ENCODE measurements at regions of chr11 and their contacts with region 1.

Region 1: GRCh38 chr11:63855975-63856749 is 17.3 kb downstream of the MARK2 start:
- DNase-seq: no peak
- H3K4me3 ChIP-seq: no peak overlapping the region
- H3K27ac ChIP-seq: no peak overlapping the region
- H3K4me1 ChIP-seq: peaks cover 0 to 5% (median 0%) of the 10 kb centered on the region in 4 experiments; a peak in 1 of 7 replicates
- H3K27me3 ChIP-seq: no peaks in the 10 kb centered on the region
- CTCF ChIP-seq: no peak
- EP300 ChIP-seq: no peak
- POLR2A ChIP-seq: no peak
- RAD21 ChIP-seq: no peak

Region 2: GRCh38 chr11:63427971-63428508 is 428.1 kb before region 1 on chr11:
- CTCF ChIA-PET with region 1: no interaction called
- POLR2A ChIA-PET with region 1: no interaction called
- DNase-seq: peak in 1 of 2 experiments; percentile 13
- H3K4me3 ChIP-seq: no peak overlapping the region
- H3K27ac ChIP-seq: no peak overlapping the region
- H3K4me1 ChIP-seq: peaks cover 0 to 3% (median 3%) of the 10 kb centered on the region in 4 experiments; a peak in 2 of 7 replicates
- H3K27me3 ChIP-seq: no peaks in the 10 kb centered on the region
- CTCF ChIP-seq: peak; percentile 18 to 75 (median 23); a peak in 3 of 4 replicates
- EP300 ChIP-seq: no peak
- POLR2A ChIP-seq: no peak
- RAD21 ChIP-seq: peak; percentile 40 to 52; a peak in 3 of 4 replicates

Region 3: DNA sequence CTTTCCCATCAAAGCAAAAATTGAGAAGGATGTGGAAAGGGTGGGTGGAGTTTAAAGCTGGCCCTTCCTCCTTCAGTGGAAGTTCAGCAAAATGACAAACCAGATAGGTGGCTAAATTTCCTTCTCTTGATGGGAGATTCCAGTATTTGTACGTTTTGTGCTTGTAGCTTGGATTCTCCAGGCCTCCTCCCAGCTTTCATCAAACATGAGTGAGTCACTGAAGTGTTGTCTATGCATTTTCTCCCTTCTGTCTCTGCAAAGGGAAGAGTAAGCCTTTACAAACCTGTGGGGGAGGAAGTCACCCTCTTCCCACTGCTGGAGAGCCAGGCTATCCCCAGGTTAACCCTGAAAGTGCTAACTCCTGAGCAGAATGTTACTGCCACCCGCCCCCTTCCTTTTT is 10.9 kb before region 1 on chr11:
- CTCF ChIA-PET with region 1: interaction called, 13 read pairs
- POLR2A ChIA-PET with region 1: interaction called, 22 read pairs
- DNase-seq: no peak
- H3K4me3 ChIP-seq: no peak overlapping the region
- H3K27ac ChIP-seq: no peak overlapping the region
- H3K4me1 ChIP-seq: peaks cover 28 to 43% (median 35%) of the 10 kb centered on the region in 4 experiments
- H3K27me3 ChIP-seq: no peaks in the 10 kb centered on the region
- CTCF ChIP-seq: no peak
- EP300 ChIP-seq: no peak
- POLR2A ChIP-seq: no peak
- RAD21 ChIP-seq: no peak

Region 4: GRCh38 chr11:64021757-64022093 is 165.6 kb after region 1 on chr11:
- CTCF ChIA-PET with region 1: no interaction called
- POLR2A ChIA-PET with region 1: no interaction called
- DNase-seq: no peak
- H3K4me3 ChIP-seq: no peak overlapping the region
- H3K27ac ChIP-seq: no peak overlapping the region
- H3K4me1 ChIP-seq: peaks cover 3 to 44% (median 32%) of the 10 kb centered on the region in 4 experiments
- H3K27me3 ChIP-seq: peaks cover 0 to 16% (median 12%) of the 10 kb centered on the region in 4 experiments; a peak in 5 of 7 replicates
- CTCF ChIP-seq: peak in 1 of 3 experiments; percentile 5; a peak in 1 of 4 replicates
- EP300 ChIP-seq: no peak
- POLR2A ChIP-seq: no peak
- RAD21 ChIP-seq: peak in 1 of 2 experiments; percentile 11; a peak in 1 of 4 replicates